BJ (cell line): ENCODE measurements at regions of chr2 and their contacts with region 1.

Region 1: GRCh38 chr2:27016801-27017325 is 15.9 kb upstream of the TMEM214 start:
- DNase-seq: no peak
- H3K4me3 ChIP-seq: no peak overlapping the region
- H3K27me3 ChIP-seq: no peaks in the 10 kb centered on the region
- CTCF ChIP-seq: peak; percentile 73

Region 2: DNA sequence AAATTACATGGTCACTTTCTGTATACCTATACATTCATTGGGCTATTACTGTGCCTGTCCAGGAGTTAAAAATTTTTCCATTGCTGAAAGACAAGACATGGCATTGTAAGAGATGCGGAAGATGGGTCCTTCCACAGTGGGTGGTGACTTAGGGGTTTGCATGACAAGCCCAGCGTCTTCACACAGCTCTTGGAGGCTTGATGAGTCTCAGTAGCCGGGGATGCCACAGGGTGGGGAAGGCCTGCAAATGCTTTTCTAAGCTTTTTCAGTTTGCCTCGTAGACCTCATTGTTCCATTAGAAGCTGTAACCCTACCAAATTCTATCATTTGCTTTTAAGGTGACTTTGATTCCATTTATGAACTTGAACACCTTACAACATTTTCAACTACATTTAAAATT is 64.5 kb before region 1 on chr2:
- CTCF ChIA-PET with region 1: interaction called, 263 read pairs
- POLR2A ChIA-PET with region 1: no interaction called
- DNase-seq: no peak
- H3K4me3 ChIP-seq: no peak overlapping the region
- H3K27me3 ChIP-seq: peaks cover 20% of the 10 kb centered on the region
- CTCF ChIP-seq: no peak

Region 3: DNA sequence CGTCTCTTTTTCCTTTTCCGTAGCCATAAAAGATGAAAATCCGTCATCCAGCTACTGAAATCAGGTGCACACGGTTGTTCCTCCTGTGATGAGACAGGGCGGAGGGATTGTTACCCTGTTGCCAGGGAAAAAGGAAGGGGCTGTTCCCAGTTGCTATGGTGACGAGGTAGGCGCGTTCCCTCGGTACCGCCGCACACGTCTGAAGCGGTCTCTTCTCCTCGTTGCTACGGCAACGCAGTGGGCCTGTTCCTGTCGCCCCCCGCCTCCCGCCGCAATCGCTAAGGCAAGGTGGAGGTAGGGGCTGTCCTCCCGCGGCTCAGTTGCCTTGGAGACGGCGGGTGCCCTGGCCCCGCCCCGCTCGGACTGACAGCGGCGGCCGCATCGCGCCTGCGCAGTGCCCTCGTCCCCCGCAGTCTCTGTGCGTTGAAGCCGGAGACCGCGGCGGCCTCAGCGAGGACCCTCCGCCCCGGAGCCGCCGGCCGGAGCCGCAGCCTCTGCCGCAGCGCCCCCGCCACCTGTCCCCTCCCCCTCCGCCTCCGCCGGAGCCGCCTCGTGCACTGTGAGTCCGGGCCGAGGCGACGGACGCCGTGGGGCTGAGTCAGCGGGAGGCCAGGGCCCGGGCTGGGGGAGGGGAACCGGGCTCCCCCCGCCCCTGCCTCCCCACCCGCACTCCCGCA is 46.5 kb before region 1 on chr2 and contains the start of gene MAPRE3:
- CTCF ChIA-PET with region 1: interaction called, 263 read pairs
- POLR2A ChIA-PET with region 1: interaction called, 7 read pairs
- DNase-seq: no peak
- H3K4me3 ChIP-seq: peak within 1 kb of the TSS; percentile 64
- H3K27me3 ChIP-seq: peaks cover 6% of the 10 kb centered on the region
- CTCF ChIP-seq: no peak
- polyA plus RNA-seq, gene MAPRE3: 12.0 and 15.3 TPM in 2 replicates

Region 4: GRCh38 chr2:26993768-26994167 is 23.1 kb before region 1 on chr2:
- CTCF ChIA-PET with region 1: interaction called, 27 read pairs
- POLR2A ChIA-PET with region 1: no interaction called
- DNase-seq: no peak
- H3K4me3 ChIP-seq: no peak overlapping the region
- H3K27me3 ChIP-seq: no peaks in the 10 kb centered on the region
- CTCF ChIP-seq: no peak